CD8-positive, alpha-beta memory T cell (primary cell): ENCODE measurements at regions of chr6 and their contacts with region 1.

Region 1: GRCh38 chr6:89352278-89353117 is at the start of gene UBE2J1:
- DNase-seq: peak; percentile 59 to 81 (median 72)
- H3K4me3 ChIP-seq: peak within 1 kb of the TSS; percentile 69
- H3K4me3 Mint-ChIP-seq: peak within 1 kb of the TSS; percentile 92 to 99 (median 95)
- H3K27ac ChIP-seq: peak within 1 kb of the TSS; percentile 85
- H3K27ac Mint-ChIP-seq: peak within 1 kb of the TSS; percentile 93 to 98 (median 96)
- H3K4me1 ChIP-seq: peaks cover 57% of the 10 kb centered on the region
- H3K4me1 Mint-ChIP-seq: peaks cover 61 to 74% (median 69%) of the 10 kb centered on the region in 3 donors
- H3K27me3 ChIP-seq: no peaks in the 10 kb centered on the region
- H3K27me3 Mint-ChIP-seq: no peaks in the 10 kb centered on the region
- total RNA-seq, gene UBE2J1: 27.1 to 27.2 TPM

Region 2: DNA sequence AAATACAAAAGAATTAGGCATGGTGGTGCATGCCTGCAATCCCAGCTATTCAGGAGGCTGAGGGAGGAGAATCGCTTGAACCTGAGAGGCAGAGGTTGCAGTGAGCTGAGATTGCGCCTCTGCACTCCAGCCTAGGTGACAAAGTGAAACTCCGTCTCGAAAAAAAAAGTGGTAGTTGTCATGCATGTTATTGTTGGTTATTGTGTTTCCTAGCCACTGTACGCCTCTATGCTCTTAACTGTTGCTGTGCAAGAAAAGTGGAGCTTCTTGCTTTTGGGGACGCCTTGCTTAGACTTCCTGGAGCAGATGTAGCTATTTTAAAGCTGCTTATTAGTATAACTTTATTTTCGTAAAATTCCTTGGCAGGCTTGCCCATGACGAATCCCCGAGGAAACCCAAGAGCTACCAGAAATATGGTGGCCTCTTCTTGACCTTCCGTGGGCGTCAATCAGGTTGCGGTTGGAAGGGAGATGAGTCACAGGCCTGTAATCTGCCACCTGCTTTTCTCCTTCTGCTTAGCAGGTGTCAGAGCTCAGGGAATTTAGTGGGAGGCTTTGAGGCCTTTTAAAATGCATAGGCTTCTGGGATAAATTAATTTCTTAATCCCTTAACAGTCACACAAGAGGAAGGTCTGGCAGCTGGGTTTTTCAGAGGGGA is 54.7 kb before region 1 on chr6:
- CTCF ChIA-PET with region 1: interaction called, 4 read pairs
- POLR2A ChIA-PET with region 1: interaction called, 10 read pairs
- DNase-seq: peak; percentile 20 to 80 (median 51)
- H3K4me3 ChIP-seq: no peak overlapping the region
- H3K4me3 Mint-ChIP-seq: peak overlapping the region; percentile 31 to 83 (median 75)
- H3K27ac ChIP-seq: peak overlapping the region; percentile 75
- H3K27ac Mint-ChIP-seq: peak overlapping the region; percentile 84 to 98 (median 93)
- H3K4me1 ChIP-seq: peaks cover 23% of the 10 kb centered on the region
- H3K4me1 Mint-ChIP-seq: peaks cover 25 to 28% (median 27%) of the 10 kb centered on the region in 3 donors
- H3K27me3 ChIP-seq: no peaks in the 10 kb centered on the region
- H3K27me3 Mint-ChIP-seq: peaks cover 0 to 2% of the 10 kb centered on the region in 2 donors

Region 3: GRCh38 chr6:89321131-89321970 is 31.1 kb before region 1 on chr6:
- CTCF ChIA-PET with region 1: no interaction called
- POLR2A ChIA-PET with region 1: no interaction called
- DNase-seq: no peak
- H3K4me3 ChIP-seq: no peak overlapping the region
- H3K4me3 Mint-ChIP-seq: no peak overlapping the region
- H3K27ac ChIP-seq: no peak overlapping the region
- H3K27ac Mint-ChIP-seq: peak overlapping the region in 1 of 8 donors; percentile 12
- H3K4me1 ChIP-seq: no peaks in the 10 kb centered on the region
- H3K4me1 Mint-ChIP-seq: peaks cover 4 to 12% (median 6%) of the 10 kb centered on the region in 3 donors
- H3K27me3 ChIP-seq: no peaks in the 10 kb centered on the region
- H3K27me3 Mint-ChIP-seq: no peaks in the 10 kb centered on the region

Region 4: DNA sequence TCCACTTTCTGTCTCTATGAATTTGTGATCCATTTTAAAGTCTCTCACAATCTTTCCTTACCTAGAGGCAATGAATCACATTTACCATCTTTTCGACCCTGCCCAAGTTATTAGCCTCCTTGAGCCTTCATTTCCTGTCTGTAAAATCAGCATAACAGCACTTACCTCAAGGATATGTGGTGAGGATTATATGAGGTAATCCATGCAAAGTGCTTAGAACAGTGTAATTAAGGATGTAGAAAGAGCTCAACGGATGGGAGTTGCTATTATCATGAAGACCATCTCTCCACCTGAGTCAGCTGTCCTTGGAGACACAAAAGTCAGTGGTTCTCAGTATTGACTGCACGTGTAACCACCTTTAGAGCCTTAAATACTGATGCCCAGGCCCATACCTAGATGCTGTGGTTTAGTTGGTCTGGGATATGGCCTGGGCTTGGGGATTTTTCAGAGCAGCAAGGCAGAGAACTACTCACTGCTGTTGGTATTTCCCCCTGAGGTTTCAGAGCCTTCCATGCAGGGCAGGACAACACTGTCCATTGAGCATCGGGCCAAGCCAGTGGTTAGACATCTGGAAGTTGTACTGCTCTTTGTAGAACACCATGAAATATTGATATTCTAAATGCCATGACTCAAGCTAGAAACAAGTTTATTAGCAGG is 230.3 kb after region 1 on chr6:
- CTCF ChIA-PET with region 1: no interaction called
- POLR2A ChIA-PET with region 1: no interaction called
- DNase-seq: no peak
- H3K4me3 ChIP-seq: no peak overlapping the region
- H3K4me3 Mint-ChIP-seq: no peak overlapping the region
- H3K27ac ChIP-seq: no peak overlapping the region
- H3K27ac Mint-ChIP-seq: no peak overlapping the region
- H3K4me1 ChIP-seq: no peaks in the 10 kb centered on the region
- H3K4me1 Mint-ChIP-seq: no peaks in the 10 kb centered on the region
- H3K27me3 ChIP-seq: no peaks in the 10 kb centered on the region
- H3K27me3 Mint-ChIP-seq: peaks cover 0 to 3% of the 10 kb centered on the region in 2 donors

Region 5: DNA sequence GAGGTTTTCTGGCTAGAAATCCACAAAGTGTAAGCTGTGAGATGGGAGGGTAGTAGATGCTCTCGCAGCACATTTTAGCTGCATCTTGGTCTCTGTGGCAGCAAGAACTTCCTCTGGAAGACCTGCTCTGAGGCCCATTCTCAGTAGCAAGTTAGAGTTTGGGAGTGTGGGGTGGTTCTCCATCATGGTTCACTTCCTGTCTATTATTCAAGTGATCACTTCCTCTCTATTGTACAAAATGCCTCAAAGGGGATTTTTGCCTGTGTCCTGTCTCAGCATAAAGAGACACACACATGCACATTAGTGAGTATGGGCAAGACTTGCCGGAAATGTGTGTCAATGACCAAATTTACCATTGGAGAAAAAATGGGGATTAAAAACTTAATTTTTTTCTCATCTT is 243.6 kb after region 1 on chr6:
- CTCF ChIA-PET with region 1: no interaction called
- POLR2A ChIA-PET with region 1: interaction called, 12 read pairs
- DNase-seq: no peak
- H3K4me3 ChIP-seq: no peak overlapping the region
- H3K4me3 Mint-ChIP-seq: no peak overlapping the region
- H3K27ac ChIP-seq: no peak overlapping the region
- H3K27ac Mint-ChIP-seq: peak overlapping the region in 2 of 8 donors; percentile 9 to 71
- H3K4me1 ChIP-seq: peaks cover 12% of the 10 kb centered on the region
- H3K4me1 Mint-ChIP-seq: peaks cover 11 to 14% (median 14%) of the 10 kb centered on the region in 3 donors
- H3K27me3 ChIP-seq: no peaks in the 10 kb centered on the region
- H3K27me3 Mint-ChIP-seq: peaks cover 0 to 1% of the 10 kb centered on the region in 2 donors